ENCODE measurements at regions of chr7 and their contacts with region 1.

Region 1: GRCh38 chr7:100132697-100133151 is 6.0 kb downstream of the MBLAC1 start:
- DNase-seq: no peak
- H3K4me3 ChIP-seq: no peak overlapping the region
- H3K27me3 ChIP-seq: no peaks in the 10 kb centered on the region
- CTCF ChIP-seq: peak; percentile 92

Region 2: DNA sequence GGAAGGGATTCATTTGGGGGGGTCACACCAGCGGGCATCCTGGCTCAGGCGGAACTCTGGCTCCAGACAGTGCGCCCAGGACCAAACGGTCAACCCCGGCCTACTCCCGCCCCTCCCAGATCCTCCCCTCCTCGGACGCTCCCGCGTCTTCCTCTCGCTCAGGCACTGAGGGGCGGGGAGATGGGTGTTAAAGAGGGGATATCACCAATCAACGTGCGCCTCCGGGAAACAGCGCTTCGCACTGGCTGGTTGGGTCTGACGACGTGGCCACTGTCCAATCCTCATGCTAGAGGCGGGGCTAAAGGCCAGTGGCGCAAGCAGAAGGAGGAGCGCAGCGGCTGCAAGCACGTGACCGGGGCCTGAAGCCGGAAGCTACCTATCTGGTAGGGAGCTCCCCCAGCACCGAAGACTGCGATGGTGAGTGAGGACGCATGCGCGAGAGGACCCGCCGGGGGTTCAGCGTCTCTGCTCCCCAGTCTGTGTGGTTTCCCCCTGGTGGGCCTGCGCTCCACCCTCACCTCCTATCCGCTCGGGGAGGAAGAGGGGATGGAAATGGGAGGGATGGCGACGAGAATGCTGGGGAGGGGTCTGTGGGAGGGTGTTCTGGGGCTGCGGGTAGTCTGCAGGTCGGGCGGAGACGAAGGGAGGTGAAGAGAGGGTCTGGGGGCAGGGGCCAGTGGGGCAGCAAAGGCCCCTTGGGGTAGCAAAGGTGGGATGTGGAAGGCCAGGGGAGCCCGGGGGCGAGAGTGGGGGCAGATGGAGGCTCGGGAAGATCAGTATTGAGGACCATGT is 16.0 kb after region 1 on chr7 and contains the start of gene LAMTOR4:
- CTCF ChIA-PET with region 1: interaction called, 49 read pairs
- POLR2A ChIA-PET with region 1: no interaction called
- DNase-seq: peak; percentile 98
- H3K4me3 ChIP-seq: peak within 1 kb of the TSS; percentile 67
- H3K27me3 ChIP-seq: no peaks in the 10 kb centered on the region
- CTCF ChIP-seq: no peak
- polyA plus RNA-seq, gene LAMTOR4: 125 and 193 TPM in 2 replicates

Region 3: GRCh38 chr7:100167921-100168323 is 35.2 kb after region 1 on chr7:
- CTCF ChIA-PET with region 1: interaction called, 22 read pairs
- POLR2A ChIA-PET with region 1: no interaction called
- DNase-seq: no peak
- H3K4me3 ChIP-seq: peak overlapping the region; percentile 42
- H3K27me3 ChIP-seq: no peaks in the 10 kb centered on the region
- CTCF ChIP-seq: no peak

Region 4: DNA sequence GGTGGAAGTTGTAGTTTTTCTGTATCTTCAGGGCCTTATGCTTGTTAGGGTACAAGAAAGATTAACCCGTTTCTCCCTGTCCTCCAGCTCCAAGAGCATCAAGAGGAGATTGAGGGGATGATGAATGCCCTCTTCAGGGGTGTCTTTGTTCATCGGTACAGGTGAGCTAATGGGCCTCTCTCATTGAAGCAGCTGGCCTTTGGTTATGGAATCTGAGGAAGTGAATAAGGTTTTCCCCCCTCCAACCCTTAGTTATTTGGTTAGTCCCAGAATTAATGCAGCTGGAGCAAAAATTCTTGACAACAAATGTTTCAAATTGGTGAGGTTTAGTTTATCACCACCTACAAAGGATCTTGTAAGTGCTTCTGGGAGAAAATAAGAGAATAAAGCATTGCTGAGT is 62.5 kb after region 1 on chr7:
- CTCF ChIA-PET with region 1: interaction called, 10 read pairs
- POLR2A ChIA-PET with region 1: no interaction called
- DNase-seq: no peak
- H3K4me3 ChIP-seq: no peak overlapping the region
- H3K27me3 ChIP-seq: no peaks in the 10 kb centered on the region; the same call in 1 of the 2 replicates
- CTCF ChIP-seq: no peak

Region 5: DNA sequence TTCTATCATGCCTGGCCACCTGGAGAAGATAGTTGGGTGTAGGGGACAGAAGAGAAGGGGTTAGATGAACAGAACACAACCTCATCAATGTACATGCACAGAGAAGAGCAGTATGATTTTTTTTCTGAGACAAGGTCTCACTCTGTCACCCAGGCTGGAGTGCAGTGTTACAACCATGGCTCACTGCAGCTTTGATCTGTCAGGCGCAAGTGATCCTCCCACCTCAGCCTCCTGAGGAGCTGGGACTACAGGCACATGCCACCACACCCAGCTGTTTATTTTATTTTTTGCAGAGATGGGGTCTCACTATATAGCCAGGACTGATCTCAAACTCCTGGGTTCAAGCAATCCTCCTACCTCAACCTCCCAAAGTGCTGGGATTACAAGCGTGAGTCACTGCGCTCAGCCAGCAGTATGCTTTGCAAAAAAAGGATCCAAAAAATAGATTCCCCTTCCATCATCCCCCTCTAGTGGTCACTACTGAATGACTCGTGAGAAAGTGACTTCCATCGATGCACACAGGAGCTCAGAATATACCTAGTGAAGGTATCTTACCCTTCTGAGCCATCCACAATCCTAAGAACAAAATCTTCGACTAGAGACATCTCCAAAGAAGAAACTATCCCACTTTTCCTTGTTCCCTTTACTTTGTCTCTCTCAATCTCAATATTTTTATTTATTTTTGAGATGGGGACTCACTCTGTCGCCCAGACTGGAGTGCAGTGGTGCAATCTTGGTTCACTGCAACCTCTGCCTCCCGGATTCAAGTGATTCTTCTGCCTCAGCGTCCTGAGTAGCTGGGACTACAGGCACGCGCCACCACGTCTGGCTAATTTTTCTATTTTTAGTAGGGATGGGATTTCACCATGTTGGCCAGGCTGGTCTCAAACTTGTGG is 274.8 kb after region 1 on chr7:
- CTCF ChIA-PET with region 1: interaction called, 10 read pairs
- POLR2A ChIA-PET with region 1: no interaction called
- DNase-seq: peak; percentile 31
- H3K4me3 ChIP-seq: no peak overlapping the region
- H3K27me3 ChIP-seq: peaks cover 3% of the 10 kb centered on the region; the same call in 1 of the 2 replicates
- CTCF ChIP-seq: peak; percentile 77

Measured in BJ (cell line).